IMR-90 (cell line): ENCODE measurements at regions of chr5 and their contacts with region 1.

Region 1: GRCh38 chr5:181207214-181208107 is 2.5 kb upstream of the TRIM7 start:
- DNase-seq: peak; percentile 93
- ATAC-seq: peak; percentile 77
- H3K4me3 ChIP-seq: peak overlapping the region; percentile 72
- H3K27ac ChIP-seq: peak overlapping the region; percentile 42
- H3K4me1 ChIP-seq: peaks cover 4% of the 10 kb centered on the region; the same call in 1 of the 2 replicates
- H3K27me3 ChIP-seq: no peaks in the 10 kb centered on the region; the same call in 1 of the 2 replicates
- CTCF ChIP-seq: no peak
- POLR2A ChIP-seq: no peak
- RAD21 ChIP-seq: no peak

Region 2: GRCh38 chr5:181217803-181218062 is 10.3 kb after region 1 on chr5:
- CTCF ChIA-PET with region 1: interaction called, 3 read pairs
- POLR2A ChIA-PET with region 1: no interaction called
- dilution Hi-C with region 1: no loop called
- in situ Hi-C with region 1: no loop called
- intact Hi-C with region 1: loop called (anchors 1 kb)
- DNase-seq: no peak
- ATAC-seq: no peak
- H3K4me3 ChIP-seq: peak overlapping the region; percentile 55
- H3K27ac ChIP-seq: no peak overlapping the region
- H3K4me1 ChIP-seq: 0 out of 2 replicates have a peak, but pooled peaks cover 2% of the 10 kb centered on the region
- H3K27me3 ChIP-seq: no peaks in the 10 kb centered on the region; the same call in 1 of the 2 replicates
- CTCF ChIP-seq: no peak
- POLR2A ChIP-seq: no peak
- RAD21 ChIP-seq: no peak